Activated naive CD4-positive, alpha-beta T cell treated with anti-CD3 and anti-CD28 coated beads for 36 hours (primary cell): ENCODE measurements at regions of chr6 and their contacts with region 1.

Region 1: GRCh38 chr6:134640975-134641429 is 308.9 kb downstream of the ALDH8A1 start:
- DNase-seq: peak; percentile 91
- H3K4me3 Mint-ChIP-seq: no peak overlapping the region
- H3K27ac Mint-ChIP-seq: peak overlapping the region; percentile 57
- H3K4me1 Mint-ChIP-seq: peaks cover 34% of the 10 kb centered on the region
- H3K27me3 Mint-ChIP-seq: no peaks in the 10 kb centered on the region

Region 2: GRCh38 chr6:134161036-134161435 is 480.0 kb before region 1 on chr6:
- CTCF ChIA-PET with region 1: interaction called, 27 read pairs
- intact Hi-C with region 1: loop called (anchors 1 kb)
- DNase-seq: no peak
- H3K4me3 Mint-ChIP-seq: no peak overlapping the region
- H3K27ac Mint-ChIP-seq: no peak overlapping the region
- H3K4me1 Mint-ChIP-seq: peaks cover 4% of the 10 kb centered on the region
- H3K27me3 Mint-ChIP-seq: no peaks in the 10 kb centered on the region

Region 3: GRCh38 chr6:134352786-134353480 is 288.1 kb before region 1 on chr6:
- CTCF ChIA-PET with region 1: interaction called, 13 read pairs
- intact Hi-C with region 1: loop called (anchors 1 kb)
- DNase-seq: peak; percentile 53
- H3K4me3 Mint-ChIP-seq: no peak overlapping the region
- H3K27ac Mint-ChIP-seq: no peak overlapping the region
- H3K4me1 Mint-ChIP-seq: peaks cover 29% of the 10 kb centered on the region
- H3K27me3 Mint-ChIP-seq: no peaks in the 10 kb centered on the region

Region 4: DNA sequence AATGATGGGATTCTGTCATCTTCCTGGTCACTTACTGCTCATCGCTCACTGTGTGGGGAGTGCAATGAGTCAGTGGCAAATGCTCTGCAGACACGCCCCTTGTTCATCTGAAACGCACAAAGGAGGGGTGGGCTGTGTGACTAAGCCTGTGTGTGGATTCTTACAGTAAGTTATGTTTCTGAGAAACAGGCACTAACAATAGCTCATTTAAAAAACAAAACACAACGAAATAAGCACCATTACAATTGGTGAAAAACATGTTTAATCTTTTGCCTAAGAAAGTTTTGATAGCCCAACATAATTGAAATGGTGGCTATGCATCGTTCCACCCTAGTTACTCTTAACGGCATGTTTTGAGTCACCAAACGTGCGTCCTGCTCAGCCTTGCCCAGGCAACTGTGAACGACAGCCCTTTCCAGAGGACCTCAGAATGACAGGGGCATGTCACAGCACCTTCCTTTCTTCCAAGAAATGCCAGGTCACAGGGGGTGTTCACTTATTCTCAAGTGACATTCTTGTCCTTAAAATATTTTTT is 204.7 kb before region 1 on chr6:
- CTCF ChIA-PET with region 1: interaction called, 3 read pairs
- intact Hi-C with region 1: loop called (anchors 1 kb)
- DNase-seq: peak; percentile 88
- H3K4me3 Mint-ChIP-seq: peak overlapping the region; percentile 44
- H3K27ac Mint-ChIP-seq: peak overlapping the region; percentile 86
- H3K4me1 Mint-ChIP-seq: peaks cover 31% of the 10 kb centered on the region
- H3K27me3 Mint-ChIP-seq: no peaks in the 10 kb centered on the region

Region 5: GRCh38 chr6:134621858-134622257 is 19.1 kb before region 1 on chr6:
- CTCF ChIA-PET with region 1: interaction called, 16 read pairs
- intact Hi-C with region 1: no loop called
- DNase-seq: peak; percentile 39
- H3K4me3 Mint-ChIP-seq: no peak overlapping the region
- H3K27ac Mint-ChIP-seq: no peak overlapping the region
- H3K4me1 Mint-ChIP-seq: peaks cover 12% of the 10 kb centered on the region
- H3K27me3 Mint-ChIP-seq: no peaks in the 10 kb centered on the region

Region 6: DNA sequence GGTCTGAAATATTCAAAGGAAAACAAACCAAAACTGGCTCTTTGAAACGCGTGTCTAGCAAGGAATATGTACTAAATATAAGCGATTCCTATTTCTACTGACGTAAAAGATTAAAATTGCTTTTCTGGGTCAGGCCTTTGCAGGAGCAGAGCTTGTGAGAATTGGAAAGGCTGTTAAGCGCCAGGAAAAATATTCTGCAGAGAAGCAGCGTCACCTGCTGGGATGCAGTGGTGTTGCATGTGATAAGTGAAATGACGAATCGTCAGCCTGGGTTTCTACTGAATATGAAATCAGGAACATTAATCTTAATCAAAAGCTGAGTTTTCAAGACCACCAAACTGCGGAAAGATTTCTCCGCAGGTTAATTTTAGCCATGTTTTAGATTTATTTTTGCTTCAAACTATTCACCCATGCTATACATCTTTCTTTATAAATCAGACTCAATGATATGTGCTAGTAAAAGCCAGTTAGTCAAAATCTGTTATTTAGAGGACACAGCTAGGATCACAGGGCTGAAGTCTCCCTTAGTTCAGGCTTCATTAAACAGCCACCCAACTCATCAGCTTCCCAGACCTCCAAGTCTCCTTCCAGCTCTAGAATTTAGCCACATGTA is 241.5 kb after region 1 on chr6:
- CTCF ChIA-PET with region 1: interaction called, 4 read pairs
- intact Hi-C with region 1: loop called (anchors 1 kb)
- DNase-seq: peak; percentile 80
- H3K4me3 Mint-ChIP-seq: no peak overlapping the region
- H3K27ac Mint-ChIP-seq: no peak overlapping the region
- H3K4me1 Mint-ChIP-seq: no peaks in the 10 kb centered on the region
- H3K27me3 Mint-ChIP-seq: peaks cover 10% of the 10 kb centered on the region